ENCODE measurements at regions of chr5 and their contacts with region 1.

Region 1: DNA sequence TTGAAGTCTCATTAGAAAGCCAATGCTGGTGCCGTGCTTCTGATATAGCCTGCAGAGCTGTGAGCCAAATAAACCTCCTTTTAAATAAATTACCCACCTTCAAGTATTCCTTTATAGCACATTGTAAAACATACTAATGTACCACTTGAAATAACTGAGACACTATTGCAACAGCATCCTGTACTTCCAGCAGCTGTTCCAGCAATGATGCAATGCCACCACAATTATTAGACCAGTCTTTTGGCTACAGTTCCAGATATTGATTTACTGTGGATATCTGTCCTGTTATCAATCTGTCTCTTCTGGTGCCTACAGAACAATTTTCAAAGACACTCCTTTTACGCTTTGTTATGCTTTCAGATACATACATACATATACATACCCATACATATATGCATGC is 567.9 kb downstream of the TAF11L14 start:
- DNase-seq: peak; percentile 2
- H3K4me3 ChIP-seq: no peak overlapping the region
- H3K27ac ChIP-seq: no peak overlapping the region
- H3K4me1 ChIP-seq: no peaks in the 10 kb centered on the region
- H3K27me3 ChIP-seq: no peaks in the 10 kb centered on the region
- CTCF ChIP-seq: no peak

Region 2: DNA sequence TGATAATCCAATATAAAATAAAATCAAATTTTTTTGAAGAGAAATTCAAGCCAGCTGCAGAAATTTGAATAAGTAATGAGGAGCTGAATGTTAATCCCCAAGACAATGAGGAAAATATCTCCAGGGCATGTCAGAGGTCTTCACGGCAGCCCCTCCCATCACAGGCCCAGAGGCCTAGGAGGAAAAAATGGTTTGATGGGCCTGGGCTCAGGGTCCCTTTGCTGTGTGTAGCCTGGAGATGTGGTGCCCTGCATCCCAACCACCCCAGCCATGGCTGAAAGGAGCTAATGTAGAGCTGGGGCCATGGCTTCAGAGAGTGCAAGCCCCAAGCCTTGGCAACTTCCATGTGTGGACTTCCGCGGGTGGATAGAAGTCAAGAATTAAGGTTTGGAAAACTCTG is 50.4 kb after region 1 on chr5:
- CTCF ChIA-PET with region 1: no interaction called
- dilution Hi-C with region 1: no loop called
- in situ Hi-C with region 1: no loop called
- intact Hi-C with region 1: loop called (anchors 5 kb)
- DNase-seq: no peak
- H3K4me3 ChIP-seq: no peak overlapping the region
- H3K27ac ChIP-seq: no peak overlapping the region
- H3K4me1 ChIP-seq: no peaks in the 10 kb centered on the region
- H3K27me3 ChIP-seq: no peaks in the 10 kb centered on the region
- CTCF ChIP-seq: no peak

Region 3: DNA sequence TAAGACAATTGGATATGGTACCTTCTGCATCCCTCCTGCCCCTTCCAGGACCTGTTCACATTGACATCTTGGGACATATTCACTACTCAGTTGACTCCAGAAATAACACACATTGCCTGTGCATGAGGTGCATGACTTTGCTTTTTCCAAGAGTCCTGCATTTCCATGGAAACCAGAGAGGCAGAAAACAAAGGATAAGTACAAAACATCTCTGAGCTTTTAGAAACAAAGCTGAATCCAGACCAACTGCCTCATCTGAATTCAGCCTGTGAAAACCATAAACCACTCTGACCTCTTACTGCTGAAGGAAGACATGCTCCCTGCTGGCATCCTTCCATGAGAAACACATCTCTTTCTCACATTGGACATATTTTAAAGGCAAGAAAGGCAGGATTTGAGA is 127.2 kb after region 1 on chr5:
- CTCF ChIA-PET with region 1: no interaction called
- dilution Hi-C with region 1: no loop called
- in situ Hi-C with region 1: no loop called
- intact Hi-C with region 1: no loop called
- DNase-seq: no peak
- H3K4me3 ChIP-seq: no peak overlapping the region
- H3K27ac ChIP-seq: no peak overlapping the region
- H3K4me1 ChIP-seq: no peaks in the 10 kb centered on the region
- H3K27me3 ChIP-seq: no peaks in the 10 kb centered on the region
- CTCF ChIP-seq: no peak

Measured in mammary epithelial cell (primary cell).